Posterior vena cava (tissue), 2 donors: ENCODE measurements at regions of chr9 and their contacts with region 1.

Region 1: DNA sequence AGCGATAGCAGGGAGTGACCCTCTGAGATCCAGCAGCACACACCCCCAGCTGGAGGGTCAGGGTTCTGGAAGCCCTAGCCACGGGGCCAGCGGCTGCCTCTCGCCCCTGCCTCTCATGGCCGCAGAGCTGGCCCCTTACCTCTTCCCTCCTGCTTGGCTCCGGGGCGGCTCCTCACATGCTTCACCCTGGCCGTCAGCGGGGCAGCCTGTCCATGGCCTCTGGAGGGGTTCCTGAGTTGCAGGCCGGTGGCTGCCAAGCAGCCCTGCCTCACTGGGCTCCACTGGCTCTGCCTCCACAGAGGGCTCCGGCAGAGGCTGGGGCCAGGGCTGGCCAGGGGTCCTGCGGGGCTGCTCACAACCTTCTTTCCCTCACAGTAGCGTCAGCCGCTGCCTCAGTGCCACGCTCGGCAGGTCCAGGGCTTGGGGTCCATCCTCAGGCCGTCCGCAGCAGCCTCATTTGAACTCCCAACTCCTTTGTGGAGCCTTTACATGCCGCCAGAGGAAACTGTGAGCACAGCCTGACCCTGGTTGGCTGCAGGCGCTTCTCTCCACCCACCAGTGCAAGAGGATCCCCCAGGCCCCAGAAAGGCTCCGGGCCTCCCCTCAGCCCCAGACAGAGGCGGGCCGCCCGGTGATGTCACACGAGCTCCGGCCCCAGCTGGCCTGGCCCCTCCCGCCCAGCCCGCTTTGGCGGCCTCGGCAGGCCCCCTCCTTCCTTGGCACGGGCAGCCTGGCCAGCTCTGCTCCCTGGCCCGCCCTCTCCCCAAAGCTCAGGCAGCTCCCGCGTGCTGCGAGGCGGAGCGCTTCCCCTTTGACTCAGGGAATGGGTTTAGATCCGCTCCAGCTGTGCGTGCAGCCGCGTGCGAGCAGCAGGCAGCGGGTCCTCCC is at the start of gene ANGPTL2:
- DNase-seq: peak; percentile 97
- total RNA-seq, gene ANGPTL2: 45.7 to 55.9 TPM

Region 2: DNA sequence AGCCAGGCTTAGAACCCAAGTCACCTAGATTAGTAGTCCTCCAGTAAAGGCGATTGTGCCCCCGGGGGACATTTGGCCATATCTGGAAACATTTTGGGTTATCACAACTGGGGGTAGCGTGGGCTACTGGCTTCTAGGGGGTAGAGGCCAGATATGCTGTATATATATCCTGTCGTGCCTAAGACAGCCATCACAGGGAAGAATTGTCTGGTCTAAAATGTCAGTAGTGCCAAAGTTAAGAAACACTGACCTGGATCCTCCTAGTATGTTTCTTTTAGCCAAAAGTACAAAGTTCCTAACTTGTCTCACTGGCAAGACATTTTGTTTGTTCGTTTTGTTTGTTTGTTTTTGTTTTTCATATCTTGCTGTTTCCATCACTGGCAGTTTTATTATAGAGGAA is 1908.2 kb before region 1 on chr9:
- intact Hi-C with region 1: no loop called
- DNase-seq: no peak

Region 3: DNA sequence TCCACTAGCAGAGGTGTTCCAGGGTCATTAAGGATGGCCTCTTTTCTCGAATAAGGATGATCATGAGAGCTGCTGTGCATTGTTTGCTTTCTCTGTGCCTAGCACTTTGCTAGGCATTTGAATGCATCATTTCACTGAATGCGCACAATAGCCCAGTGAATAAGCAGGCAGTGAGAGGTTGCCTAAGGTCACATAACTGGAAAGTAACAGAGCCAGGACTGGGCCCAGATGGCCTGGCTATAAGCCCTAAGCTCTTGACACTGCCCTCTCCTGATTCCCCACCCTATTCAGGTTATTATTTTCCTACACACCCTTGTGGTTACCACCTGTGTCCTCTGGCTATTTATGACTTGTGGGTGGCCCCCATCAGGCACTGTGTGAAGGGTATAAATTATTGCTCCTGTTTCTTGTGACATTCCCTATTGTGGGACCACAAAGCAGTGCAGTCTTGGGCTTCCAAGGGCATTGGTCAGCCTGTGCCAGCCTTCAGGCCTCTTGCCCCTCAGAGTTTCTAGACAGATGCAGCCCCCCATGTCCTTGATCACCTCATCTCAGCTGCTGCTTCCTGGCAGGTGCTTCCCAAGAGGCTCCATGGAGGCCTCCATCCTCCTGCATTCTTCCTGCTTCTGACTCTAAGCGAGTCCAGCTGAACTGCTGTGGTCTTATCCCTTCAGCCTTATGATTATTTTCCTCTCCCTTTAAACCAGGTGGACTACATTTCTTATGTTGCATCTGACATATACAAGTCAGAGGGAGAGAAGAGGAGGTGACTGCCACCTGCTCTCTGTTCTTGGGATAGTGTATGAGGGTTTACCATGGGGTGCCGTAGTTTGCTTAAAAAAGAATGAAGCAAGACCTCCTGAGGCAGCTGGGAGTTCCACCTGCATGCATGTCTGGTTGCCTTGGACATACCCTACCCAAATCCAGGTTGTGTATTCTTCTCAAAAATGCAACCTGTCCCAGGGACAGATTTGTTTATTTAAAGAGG is 47.6 kb before region 1 on chr9:
- intact Hi-C with region 1: no loop called
- DNase-seq: no peak

Region 4: GRCh38 chr9:127107171-127107928 is 15.1 kb before region 1 on chr9:
- intact Hi-C with region 1: loop called in 1 of 2 experiments (anchors 1 kb)
- DNase-seq: peak; percentile 68

Region 5: DNA sequence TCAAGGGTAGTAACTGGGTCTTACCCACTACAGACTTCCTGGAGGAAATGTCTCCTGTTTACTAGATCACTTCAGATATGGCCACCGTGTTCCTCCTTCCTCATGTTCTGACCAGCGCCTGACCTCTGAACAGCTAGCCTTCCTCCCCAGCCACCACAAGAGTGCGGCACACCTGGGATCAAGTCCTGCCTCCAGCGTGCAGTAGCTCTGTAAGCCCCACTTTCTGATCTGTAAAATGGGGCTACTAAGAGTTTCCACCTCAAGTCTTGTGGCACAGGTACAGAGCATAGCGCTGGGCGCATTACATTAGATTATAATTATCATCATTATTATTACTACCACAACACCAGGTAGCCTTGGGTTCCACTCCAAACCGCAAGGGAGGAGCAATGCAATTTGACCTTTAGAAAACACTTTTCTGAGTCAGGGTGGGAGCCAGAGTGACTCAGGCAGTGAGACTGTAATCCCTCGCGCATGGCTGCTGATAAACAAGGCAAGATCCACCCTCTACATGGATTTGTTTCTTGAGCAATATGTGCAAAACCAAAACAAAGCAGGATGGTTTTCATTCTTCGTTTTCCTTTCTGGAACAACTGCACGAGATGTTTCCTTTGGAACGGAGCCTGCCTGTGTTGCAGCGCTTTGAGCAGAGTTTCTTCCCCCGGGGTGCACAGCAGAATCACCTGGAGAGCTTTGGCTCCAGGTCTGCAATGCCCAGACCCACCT is 65.0 kb after region 1 on chr9:
- intact Hi-C with region 1: loop called in 1 of 2 experiments (anchors 5 kb)
- DNase-seq: peak; percentile 89

Region 6: DNA sequence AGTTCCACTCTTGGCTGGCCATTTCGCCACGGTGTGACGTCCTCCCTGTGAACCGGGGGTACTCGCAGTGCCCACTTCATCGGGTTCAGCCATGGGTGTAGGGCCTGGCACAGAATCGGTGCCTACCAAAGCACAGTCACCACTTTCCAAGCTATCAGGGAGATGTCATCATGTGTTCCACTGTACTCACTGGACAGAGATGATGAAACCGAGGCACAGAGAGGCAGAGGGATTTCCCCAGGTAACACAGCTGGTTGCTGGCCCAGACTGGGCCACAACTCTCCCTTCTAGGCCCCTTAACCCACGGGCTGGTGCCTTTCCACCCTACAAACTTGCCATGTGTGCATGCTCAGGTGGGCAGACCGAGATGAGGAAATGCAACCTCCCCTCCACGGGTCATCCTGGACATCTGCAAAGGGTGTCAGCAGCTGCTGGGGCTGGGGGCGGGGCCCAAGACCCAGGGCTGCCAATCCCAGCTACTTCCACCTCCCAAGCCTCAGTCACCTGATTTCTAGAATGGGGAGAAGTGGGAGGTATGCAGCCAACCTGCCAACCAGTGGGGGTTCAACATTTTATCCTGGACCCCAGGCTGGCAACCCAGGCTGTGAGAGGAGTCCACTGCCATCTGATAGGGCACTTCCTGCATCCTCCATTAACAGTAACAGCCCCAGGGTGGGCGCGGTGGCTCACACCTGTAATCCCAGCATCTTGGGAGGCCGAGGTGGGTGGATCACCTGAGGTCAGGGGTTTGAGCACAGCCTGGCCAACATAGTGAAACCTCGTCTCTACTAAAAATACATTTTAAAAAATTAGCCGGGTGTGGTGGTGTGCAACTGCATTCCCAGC is 656.9 kb after region 1 on chr9:
- intact Hi-C with region 1: no loop called
- DNase-seq: no peak